Gastrocnemius medialis (tissue), 4 donors: ENCODE measurements at regions of chr15 and their contacts with region 1.

Region 1: DNA sequence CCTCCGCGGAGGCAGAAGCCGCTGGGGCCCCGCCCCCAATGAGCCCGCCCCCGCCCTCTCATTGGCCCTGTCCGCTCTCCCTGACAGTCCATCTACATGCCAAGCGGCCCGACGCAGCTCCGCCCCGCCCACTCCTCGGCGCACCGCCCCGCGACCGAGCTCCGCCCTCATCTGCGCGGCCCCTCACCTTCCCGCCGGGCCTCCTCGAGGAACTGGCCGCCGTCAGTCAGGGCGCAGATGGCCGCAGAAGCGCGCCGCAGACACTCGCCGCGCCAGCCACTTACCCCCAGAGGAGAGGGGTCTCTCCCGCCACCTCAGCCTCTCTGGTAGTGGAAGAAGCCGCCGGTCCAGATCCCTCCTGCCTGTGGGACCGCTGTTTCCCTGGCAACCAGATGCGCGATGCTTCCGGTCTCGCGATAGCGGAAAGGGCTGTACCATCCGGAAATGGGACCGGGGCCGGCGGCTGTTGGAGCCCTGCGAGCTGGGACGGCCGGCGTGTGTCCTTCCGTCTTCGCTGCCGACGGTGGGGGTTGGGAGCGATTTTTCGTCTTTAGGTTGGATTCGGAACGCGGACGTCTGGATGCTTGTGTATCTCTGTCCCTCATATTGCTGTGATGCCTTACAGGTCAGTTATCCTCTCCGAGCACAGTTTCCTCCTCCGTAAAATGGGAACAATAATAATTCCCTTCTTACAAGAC is at the start of gene FSIP1:
- DNase-seq: peak; percentile 81 to 88
- ATAC-seq: peak; percentile 97
- H3K4me3 ChIP-seq: peak within 1 kb of the TSS; percentile 64 to 99 (median 88)
- H3K27ac ChIP-seq: peak within 1 kb of the TSS; percentile 49 to 75 (median 68)
- H3K4me1 ChIP-seq: peaks cover 0 to 14% of the 10 kb centered on the region in 2 donors
- H3K27me3 ChIP-seq: no peaks in the 10 kb centered on the region
- CTCF ChIP-seq: no peak
- POLR2A ChIP-seq: peak in 1 of 2 donors; percentile 25
- total RNA-seq, gene FSIP1: 0.11 to 23.9 (median 1.0) TPM in 3 of 4 donors, not detected in the other

Region 2: DNA sequence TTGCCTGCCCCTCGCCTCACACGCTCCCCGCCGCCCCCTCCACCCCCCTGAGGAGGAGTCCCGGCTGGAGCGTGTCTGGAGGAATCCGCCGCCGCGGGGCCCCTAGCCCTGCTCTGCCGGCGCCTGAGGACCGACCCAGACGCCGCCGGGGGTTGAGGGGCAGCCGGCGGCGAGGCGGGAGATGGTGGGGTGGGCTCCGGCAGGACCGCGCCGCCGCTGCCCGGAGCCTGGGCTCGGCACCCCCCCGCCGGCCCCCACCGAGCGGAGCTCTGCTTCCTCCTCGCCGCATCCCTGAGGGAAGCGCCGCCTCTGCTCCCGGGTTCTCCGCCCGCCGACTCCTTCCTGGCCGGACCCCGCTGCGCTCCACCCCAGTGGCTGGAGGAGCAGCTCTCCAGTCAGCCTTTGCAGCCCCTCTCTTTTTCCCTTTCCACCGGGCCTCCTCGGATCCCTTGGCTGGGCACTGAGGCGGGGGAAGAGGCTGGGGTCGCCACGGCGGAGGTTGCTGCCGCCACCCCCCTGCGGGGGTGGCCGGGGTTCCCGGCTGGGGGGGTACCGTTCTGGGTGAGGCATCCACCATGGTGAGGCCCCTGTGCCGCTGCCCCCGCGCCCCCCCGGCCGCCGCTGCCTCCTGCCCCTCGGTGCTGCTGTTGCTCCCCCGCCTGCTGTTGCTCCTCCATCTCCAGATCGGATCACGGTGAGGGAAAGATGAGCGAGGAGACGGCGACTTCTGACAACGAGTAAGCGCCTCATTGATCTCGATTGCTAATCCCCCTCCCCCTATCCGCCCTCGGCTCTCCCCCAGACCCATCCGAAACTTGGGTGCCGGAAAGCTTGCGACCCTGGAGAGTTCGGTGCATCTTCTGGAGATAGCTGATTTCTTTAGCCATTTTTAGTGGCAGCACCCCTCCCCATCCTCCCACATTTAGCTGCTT is 1529.8 kb before region 1 on chr15 and contains the start of gene SPRED1:
- in situ Hi-C with region 1: no loop called
- intact Hi-C with region 1: loop called (anchors 5 kb)
- DNase-seq: peak; percentile 42 to 45
- ATAC-seq: peak; percentile 50 to 55
- H3K4me3 ChIP-seq: peak within 1 kb of the TSS; percentile 72 to 94 (median 88)
- H3K27ac ChIP-seq: peak within 1 kb of the TSS; percentile 87 to 95 (median 93)
- H3K4me1 ChIP-seq: peaks cover 0 to 29% of the 10 kb centered on the region in 2 donors
- H3K27me3 ChIP-seq: no peaks in the 10 kb centered on the region
- CTCF ChIP-seq: no peak
- POLR2A ChIP-seq: no peak
- total RNA-seq, gene SPRED1: 3.7 to 7.2 (median 5.3) TPM

Region 3: DNA sequence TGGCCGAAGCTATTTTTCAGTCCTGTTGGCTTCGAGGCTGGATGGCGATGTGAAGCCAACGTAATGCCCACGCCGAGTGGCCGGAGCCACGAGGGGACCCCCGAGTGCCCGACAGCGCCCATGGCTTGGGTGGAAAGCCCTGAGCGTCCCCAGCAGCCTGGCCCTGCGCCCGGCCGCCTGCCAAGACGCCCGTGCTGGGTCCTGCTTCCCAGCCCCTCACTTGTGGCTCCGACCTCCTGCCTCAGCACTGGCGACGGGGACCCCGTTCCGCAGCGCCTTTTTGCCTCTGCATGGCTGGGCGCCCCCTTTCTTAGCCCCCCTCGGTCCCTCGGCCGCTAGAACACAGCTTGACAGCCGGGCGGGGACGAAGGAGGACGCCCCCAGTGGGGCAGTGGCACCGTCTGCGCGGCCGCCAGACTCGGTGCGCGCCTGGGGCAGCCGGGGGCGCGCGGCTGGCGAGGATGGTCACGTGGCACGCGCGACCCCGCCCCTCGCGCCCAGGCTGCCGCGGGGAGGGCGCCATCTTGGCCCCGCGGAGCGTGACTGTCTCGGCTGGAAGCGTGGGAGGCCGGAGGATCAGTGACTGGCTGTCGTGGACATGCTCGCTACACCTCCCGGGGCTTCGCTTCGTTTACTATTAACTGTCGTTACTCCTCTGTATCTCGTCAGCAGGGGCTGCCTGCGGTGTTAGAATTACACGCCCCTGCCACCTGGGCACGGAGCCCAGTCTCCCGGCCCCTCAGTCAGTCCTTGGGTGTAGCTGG is 138.1 kb after region 1 on chr15:
- in situ Hi-C with region 1: loop called in 1 of 4 experiments (anchors 25 kb)
- intact Hi-C with region 1: no loop called
- DNase-seq: peak; percentile 25 to 47
- ATAC-seq: peak; percentile 77 to 87
- H3K4me3 ChIP-seq: peak overlapping the region; percentile 54 to 95 (median 75)
- H3K27ac ChIP-seq: peak overlapping the region; percentile 43 to 71 (median 66)
- H3K4me1 ChIP-seq: no peaks in the 10 kb centered on the region
- H3K27me3 ChIP-seq: peaks cover 10 to 26% (median 16%) of the 10 kb centered on the region in 3 donors
- CTCF ChIP-seq: peak in 1 of 5 experiments; percentile 16
- POLR2A ChIP-seq: peak in 1 of 2 donors; percentile 37

Region 4: DNA sequence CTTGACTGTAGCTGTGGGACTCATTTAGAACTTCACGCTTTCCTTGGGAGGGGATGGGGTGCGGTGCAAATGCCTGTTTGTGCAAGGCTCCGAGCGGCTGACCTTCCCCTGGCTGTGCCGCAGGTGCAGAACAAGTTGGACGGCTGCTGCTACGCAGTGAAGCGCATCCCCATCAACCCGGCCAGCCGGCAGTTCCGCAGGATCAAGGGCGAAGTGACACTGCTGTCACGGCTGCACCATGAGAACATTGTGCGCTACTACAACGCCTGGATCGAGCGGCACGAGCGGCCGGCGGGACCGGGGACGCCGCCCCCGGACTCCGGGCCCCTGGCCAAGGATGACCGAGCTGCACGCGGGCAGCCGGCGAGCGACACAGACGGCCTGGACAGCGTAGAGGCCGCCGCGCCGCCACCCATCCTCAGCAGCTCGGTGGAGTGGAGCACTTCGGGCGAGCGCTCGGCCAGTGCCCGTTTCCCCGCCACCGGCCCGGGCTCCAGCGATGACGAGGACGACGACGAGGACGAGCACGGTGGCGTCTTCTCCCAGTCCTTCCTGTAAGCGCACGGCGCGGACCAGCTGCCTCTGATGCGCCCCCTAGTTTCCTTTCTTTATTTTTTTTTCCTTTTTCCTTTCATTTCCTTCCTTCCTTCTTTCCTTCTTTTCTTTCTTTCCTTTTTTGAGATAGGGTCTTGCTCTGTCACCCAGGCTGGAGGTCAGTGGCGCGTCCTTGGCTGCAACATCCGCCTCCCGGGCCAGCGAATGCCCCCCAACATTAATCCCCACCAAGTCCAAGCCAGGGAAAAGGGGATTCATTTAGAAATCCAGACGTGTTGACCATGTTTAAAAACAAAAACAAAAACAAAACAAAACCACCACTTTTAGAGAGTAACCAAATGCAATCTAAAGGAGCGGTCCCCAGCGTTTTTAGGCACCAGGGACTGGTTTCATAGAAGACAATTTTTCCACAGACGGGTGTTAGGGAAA is 194.0 kb after region 1 on chr15:
- in situ Hi-C with region 1: loop called in 1 of 4 experiments (anchors 10 kb)
- intact Hi-C with region 1: loop called (anchors 2 kb)
- DNase-seq: peak; percentile 11 to 51
- ATAC-seq: peak; percentile 83 to 84
- H3K4me3 ChIP-seq: peak overlapping the region; percentile 54 to 59 (median 56)
- H3K27ac ChIP-seq: peak overlapping the region; percentile 63 to 76 (median 72)
- H3K4me1 ChIP-seq: no peaks in the 10 kb centered on the region
- H3K27me3 ChIP-seq: no peaks in the 10 kb centered on the region
- CTCF ChIP-seq: peak in 3 of 5 experiments; percentile 24 to 55 (median 48)
- POLR2A ChIP-seq: no peak

Region 5: DNA sequence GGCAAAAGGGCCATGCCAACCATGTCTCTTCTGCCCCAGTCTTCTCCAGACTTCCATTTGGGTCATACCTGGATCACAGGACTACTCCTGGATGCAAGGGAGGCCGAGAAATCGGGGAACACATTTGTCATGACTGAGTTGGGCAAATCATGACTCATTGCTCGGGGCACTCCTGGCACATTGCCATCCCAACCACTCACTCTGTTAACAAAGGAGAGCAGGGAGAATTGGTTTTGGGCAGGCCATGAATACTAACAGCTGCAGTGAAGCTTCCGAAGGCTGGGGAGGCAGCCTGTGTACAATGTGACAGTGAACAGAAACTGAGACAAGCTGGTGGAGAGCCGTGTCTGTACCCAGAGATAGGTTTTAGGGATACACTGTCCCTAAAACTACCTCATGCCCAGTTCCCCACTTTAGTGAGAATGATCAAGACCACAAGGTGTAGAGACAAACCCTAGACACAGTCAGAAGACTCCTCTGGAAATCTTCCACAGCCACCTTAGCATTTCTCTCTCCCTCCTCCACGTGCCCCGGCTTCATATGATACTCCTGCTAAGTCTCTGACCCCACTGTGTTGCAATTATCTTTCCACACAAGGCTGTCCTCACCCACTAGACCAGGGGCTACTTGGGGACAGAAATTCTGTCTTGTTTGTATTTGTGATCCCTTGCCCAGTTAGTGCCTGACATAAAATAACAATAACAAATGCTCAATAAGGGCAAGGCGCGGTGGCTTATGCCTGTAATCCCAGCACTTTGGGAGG is 367.8 kb after region 1 on chr15:
- in situ Hi-C with region 1: loop called in 1 of 4 experiments (anchors 25 kb)
- intact Hi-C with region 1: no loop called
- DNase-seq: peak; percentile 64 to 82
- ATAC-seq: peak; percentile 96 to 97
- H3K4me3 ChIP-seq: no peak overlapping the region
- H3K27ac ChIP-seq: peak overlapping the region; percentile 61 to 83 (median 78)
- H3K4me1 ChIP-seq: peaks cover 18 to 22% of the 10 kb centered on the region in 2 donors
- H3K27me3 ChIP-seq: no peaks in the 10 kb centered on the region
- CTCF ChIP-seq: no peak
- POLR2A ChIP-seq: no peak